Activated CD8-positive, alpha-beta T cell treated with anti-CD3 and anti-CD28 coated beads for 36 hours (primary cell): ENCODE measurements at regions of chr2 and their contacts with region 1.

Region 1: GRCh38 chr2:231706731-231707624 is 1.3 kb upstream of the PTMA start:
- DNase-seq: peak; percentile 98
- ATAC-seq: peak; percentile 62
- H3K4me3 Mint-ChIP-seq: peak overlapping the region; percentile 96
- H3K27ac Mint-ChIP-seq: peak overlapping the region; percentile 100
- H3K4me1 Mint-ChIP-seq: peaks cover 20% of the 10 kb centered on the region
- H3K27me3 Mint-ChIP-seq: peaks cover 2% of the 10 kb centered on the region
- CTCF ChIP-seq: peak; percentile 77

Region 2: GRCh38 chr2:231094736-231095346 is 612.1 kb before region 1 on chr2:
- CTCF ChIA-PET with region 1: no interaction called
- POLR2A ChIA-PET with region 1: no interaction called
- intact Hi-C with region 1: no loop called
- DNase-seq: no peak
- ATAC-seq: no peak
- H3K4me3 Mint-ChIP-seq: no peak overlapping the region
- H3K27ac Mint-ChIP-seq: no peak overlapping the region
- H3K4me1 Mint-ChIP-seq: no peaks in the 10 kb centered on the region
- H3K27me3 Mint-ChIP-seq: no peaks in the 10 kb centered on the region
- CTCF ChIP-seq: no peak

Region 3: GRCh38 chr2:231463698-231464575 is 243.0 kb before region 1 on chr2 and contains the start of gene NCL:
- CTCF ChIA-PET with region 1: interaction called, 4 read pairs
- POLR2A ChIA-PET with region 1: interaction called, 94 read pairs
- intact Hi-C with region 1: loop called (anchors 5 kb)
- DNase-seq: peak; percentile 89
- ATAC-seq: peak; percentile 47
- H3K4me3 Mint-ChIP-seq: peak within 1 kb of the TSS; percentile 100
- H3K27ac Mint-ChIP-seq: peak within 1 kb of the TSS; percentile 98
- H3K4me1 Mint-ChIP-seq: peaks cover 38% of the 10 kb centered on the region
- H3K27me3 Mint-ChIP-seq: no peaks in the 10 kb centered on the region
- CTCF ChIP-seq: no peak
- total RNA-seq, gene NCL: 1,312 to 1,361 TPM

Region 4: GRCh38 chr2:231541645-231542044 is 165.3 kb before region 1 on chr2:
- CTCF ChIA-PET with region 1: no interaction called
- POLR2A ChIA-PET with region 1: no interaction called
- intact Hi-C with region 1: no loop called
- DNase-seq: peak; percentile 59
- ATAC-seq: no peak
- H3K4me3 Mint-ChIP-seq: no peak overlapping the region
- H3K27ac Mint-ChIP-seq: no peak overlapping the region
- H3K4me1 Mint-ChIP-seq: peaks cover 20% of the 10 kb centered on the region
- H3K27me3 Mint-ChIP-seq: no peaks in the 10 kb centered on the region
- CTCF ChIP-seq: no peak

Region 5: DNA sequence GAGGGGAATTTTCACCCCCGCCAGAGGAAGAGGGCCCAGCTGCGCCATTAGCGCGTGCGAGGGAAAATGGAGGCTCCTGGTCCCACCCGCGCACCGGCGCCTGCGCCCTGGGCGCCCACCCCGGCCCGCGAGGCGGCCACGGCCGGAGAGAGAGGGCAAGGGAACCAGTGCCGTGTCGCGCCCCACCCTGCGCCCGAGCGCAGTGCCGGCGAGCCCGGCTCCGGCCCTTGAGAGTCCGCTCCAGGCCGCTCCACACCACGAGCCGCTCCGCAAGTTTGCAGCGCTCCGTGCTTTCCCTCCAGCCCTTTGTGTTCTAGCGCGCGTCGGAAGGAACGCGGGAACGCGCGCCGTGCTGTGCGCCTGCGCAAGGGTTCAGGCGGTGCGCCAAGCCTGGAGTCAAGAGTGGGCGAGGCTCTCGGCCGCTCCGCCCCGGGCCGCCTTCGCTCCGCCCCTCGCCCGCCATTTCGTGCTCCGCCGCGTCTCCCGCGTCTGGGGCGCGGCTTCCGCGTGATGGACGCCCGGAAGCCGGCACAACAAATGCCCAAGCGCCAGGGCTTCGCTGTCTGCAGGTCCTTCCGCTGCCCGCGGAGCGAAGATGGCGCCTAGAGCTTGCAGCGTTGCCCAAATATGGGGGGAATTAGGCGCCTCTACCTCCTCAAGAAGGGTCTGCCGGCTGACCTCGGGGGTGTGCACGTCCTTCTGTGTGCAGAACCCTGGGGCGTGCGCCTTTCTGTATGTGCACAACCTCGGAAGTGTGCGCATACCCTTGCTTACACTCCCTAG is 44.8 kb before region 1 on chr2:
- CTCF ChIA-PET with region 1: interaction called, 385 read pairs
- POLR2A ChIA-PET with region 1: interaction called, 22 read pairs
- intact Hi-C with region 1: no loop called
- DNase-seq: peak; percentile 96
- ATAC-seq: peak; percentile 93
- H3K4me3 Mint-ChIP-seq: peak overlapping the region; percentile 70
- H3K27ac Mint-ChIP-seq: peak overlapping the region; percentile 95
- H3K4me1 Mint-ChIP-seq: peaks cover 27% of the 10 kb centered on the region
- H3K27me3 Mint-ChIP-seq: no peaks in the 10 kb centered on the region
- CTCF ChIP-seq: no peak

Region 6: GRCh38 chr2:231674587-231675338 is 32.2 kb before region 1 on chr2:
- CTCF ChIA-PET with region 1: interaction called, 385 read pairs
- POLR2A ChIA-PET with region 1: interaction called, 81 read pairs
- intact Hi-C with region 1: loop called (anchors 2 kb)
- DNase-seq: peak; percentile 77
- ATAC-seq: peak; percentile 85
- H3K4me3 Mint-ChIP-seq: peak overlapping the region; percentile 16
- H3K27ac Mint-ChIP-seq: no peak overlapping the region
- H3K4me1 Mint-ChIP-seq: peaks cover 12% of the 10 kb centered on the region
- H3K27me3 Mint-ChIP-seq: no peaks in the 10 kb centered on the region
- CTCF ChIP-seq: peak; percentile 92

Region 7: DNA sequence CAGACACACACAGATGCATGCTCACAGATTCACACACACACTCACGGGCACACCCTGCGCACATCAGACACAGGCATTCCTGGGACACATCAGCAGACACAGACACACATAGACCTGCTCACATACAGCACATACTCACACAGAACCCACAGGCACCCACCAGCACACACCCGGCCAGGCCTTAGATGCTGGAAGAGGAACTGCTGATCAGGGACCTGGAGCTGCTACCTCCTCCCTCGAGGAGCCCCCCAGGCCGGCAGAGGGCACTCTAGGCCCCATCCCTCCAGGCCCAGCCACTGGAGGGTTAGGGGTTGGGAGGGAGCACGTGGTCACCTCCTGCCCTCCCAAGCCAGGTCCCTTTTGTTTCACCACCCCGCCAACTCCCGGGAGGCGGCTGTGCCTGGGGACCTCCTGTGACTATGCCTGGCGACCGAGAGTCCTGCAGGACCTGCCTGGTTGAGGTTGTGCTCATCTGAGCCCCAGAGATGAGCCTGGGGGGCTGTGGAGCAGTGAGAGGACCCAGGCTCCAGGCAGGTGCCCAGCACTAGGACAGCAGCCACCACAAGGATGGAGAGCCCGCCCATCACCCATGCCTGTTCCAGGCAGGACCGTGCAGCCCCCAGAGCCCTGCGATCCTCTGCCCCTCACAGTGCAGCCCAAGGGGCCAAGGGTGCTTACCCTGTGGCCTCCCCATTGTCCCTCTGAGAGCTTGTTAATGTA is 19.7 kb before region 1 on chr2:
- CTCF ChIA-PET with region 1: interaction called, 176 read pairs
- POLR2A ChIA-PET with region 1: interaction called, 55 read pairs
- intact Hi-C with region 1: no loop called
- DNase-seq: peak; percentile 79
- ATAC-seq: peak; percentile 93
- H3K4me3 Mint-ChIP-seq: peak overlapping the region; percentile 1
- H3K27ac Mint-ChIP-seq: no peak overlapping the region
- H3K4me1 Mint-ChIP-seq: peaks cover 8% of the 10 kb centered on the region
- H3K27me3 Mint-ChIP-seq: peaks cover 7% of the 10 kb centered on the region
- CTCF ChIP-seq: peak; percentile 71

Region 8: DNA sequence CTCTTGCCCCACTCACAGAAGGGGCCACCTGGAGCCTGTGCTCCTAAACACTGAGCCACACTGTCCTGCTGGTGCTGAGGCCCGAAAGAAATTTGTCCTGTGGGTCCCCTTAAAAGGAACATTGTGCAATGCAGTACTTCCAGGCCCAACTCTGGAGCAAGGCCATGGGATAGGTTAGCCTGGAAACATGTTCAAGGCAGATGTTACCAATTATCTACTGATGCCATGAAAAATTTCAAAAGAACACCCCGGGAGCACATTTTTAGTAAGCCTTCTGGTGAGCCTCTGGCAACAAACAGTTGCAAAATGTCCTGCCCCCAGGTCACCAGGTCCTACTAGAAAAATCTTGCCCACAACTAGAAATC is 11.0 kb before region 1 on chr2:
- CTCF ChIA-PET with region 1: interaction called, 176 read pairs
- POLR2A ChIA-PET with region 1: interaction called, 15 read pairs
- intact Hi-C with region 1: no loop called
- DNase-seq: no peak
- ATAC-seq: no peak
- H3K4me3 Mint-ChIP-seq: no peak overlapping the region
- H3K27ac Mint-ChIP-seq: no peak overlapping the region
- H3K4me1 Mint-ChIP-seq: no peaks in the 10 kb centered on the region
- H3K27me3 Mint-ChIP-seq: no peaks in the 10 kb centered on the region
- CTCF ChIP-seq: no peak

Region 9: GRCh38 chr2:231786177-231786916 is 79.4 kb after region 1 on chr2 and contains the start of gene COPS7B:
- CTCF ChIA-PET with region 1: interaction called, 4 read pairs
- POLR2A ChIA-PET with region 1: interaction called, 15 read pairs
- intact Hi-C with region 1: no loop called
- DNase-seq: peak; percentile 92
- ATAC-seq: peak; percentile 59
- H3K4me3 Mint-ChIP-seq: peak within 1 kb of the TSS; percentile 81
- H3K27ac Mint-ChIP-seq: peak within 1 kb of the TSS; percentile 90
- H3K4me1 Mint-ChIP-seq: peaks cover 56% of the 10 kb centered on the region
- H3K27me3 Mint-ChIP-seq: no peaks in the 10 kb centered on the region
- CTCF ChIP-seq: peak; percentile 52
- total RNA-seq, gene COPS7B: 51.3 to 53.6 TPM